Lower lobe of right lung (tissue), 2 donors: ENCODE measurements at regions of chr5 and their contacts with region 1.

Region 1: DNA sequence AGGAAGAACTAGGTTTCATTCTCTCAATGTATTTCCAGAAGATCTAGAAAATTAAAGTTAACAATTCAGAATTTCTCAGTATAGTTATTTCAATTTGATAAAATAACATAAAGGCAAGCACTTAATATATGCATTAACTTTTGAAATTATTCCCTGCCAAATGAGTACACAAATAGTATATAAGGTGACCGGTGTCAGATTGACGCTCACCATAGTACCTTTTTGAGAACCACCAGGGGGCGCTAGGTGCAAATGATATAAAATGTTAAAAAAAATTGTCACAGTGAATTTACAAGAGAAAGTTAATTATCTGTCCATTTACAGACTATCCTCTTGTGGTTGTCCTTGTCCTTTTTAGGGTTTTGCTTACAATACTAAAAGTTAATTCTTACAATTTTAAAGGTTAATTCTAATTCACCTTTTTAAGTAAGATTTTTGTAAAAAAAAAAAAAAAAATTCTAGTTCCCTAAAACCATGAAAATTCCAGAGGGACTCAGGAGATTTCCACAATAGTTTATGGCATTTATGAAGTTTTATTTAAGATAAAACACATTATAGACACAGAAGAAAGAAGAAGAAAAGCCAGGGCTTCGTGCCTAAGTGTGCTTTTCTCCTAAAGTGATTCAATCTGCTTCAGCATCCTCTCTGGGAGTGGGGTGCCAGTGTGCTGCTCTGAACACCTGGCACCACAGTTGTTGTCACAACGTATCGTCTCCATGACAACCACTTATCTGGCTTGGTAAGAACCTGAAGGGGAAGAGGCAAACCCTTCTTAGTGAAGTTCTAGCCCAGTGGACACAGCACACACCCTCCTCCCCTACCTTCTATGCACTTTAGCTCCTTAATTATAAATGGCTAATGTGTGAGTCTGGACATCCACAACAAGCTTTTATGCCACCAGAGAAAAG is 1.7 kb downstream of the ADAMTS16 start:
- DNase-seq: no peak
- ATAC-seq: peak in 1 of 2 donors; percentile 62
- H3K4me3 ChIP-seq: no peak overlapping the region
- H3K27ac ChIP-seq: no peak overlapping the region
- H3K4me1 ChIP-seq: peaks cover 14% of the 10 kb centered on the region
- H3K27me3 ChIP-seq: peaks cover 38% of the 10 kb centered on the region
- CTCF ChIP-seq: peak; percentile 78

Region 2: GRCh38 chr5:4879693-4880303 is 262.1 kb before region 1 on chr5:
- intact Hi-C with region 1: no loop called
- DNase-seq: peak; percentile 61
- ATAC-seq: peak; percentile 82 to 85
- H3K4me3 ChIP-seq: no peak overlapping the region
- H3K27ac ChIP-seq: no peak overlapping the region
- H3K4me1 ChIP-seq: no peaks in the 10 kb centered on the region
- H3K27me3 ChIP-seq: no peaks in the 10 kb centered on the region
- CTCF ChIP-seq: peak; percentile 88

Region 3: GRCh38 chr5:5419294-5420210 is 277.7 kb after region 1 on chr5:
- intact Hi-C with region 1: loop called (anchors 10 kb)
- DNase-seq: no peak
- ATAC-seq: no peak
- H3K4me3 ChIP-seq: no peak overlapping the region
- H3K27ac ChIP-seq: no peak overlapping the region
- H3K4me1 ChIP-seq: peaks cover 33% of the 10 kb centered on the region
- H3K27me3 ChIP-seq: no peaks in the 10 kb centered on the region
- CTCF ChIP-seq: peak; percentile 58

Region 4: DNA sequence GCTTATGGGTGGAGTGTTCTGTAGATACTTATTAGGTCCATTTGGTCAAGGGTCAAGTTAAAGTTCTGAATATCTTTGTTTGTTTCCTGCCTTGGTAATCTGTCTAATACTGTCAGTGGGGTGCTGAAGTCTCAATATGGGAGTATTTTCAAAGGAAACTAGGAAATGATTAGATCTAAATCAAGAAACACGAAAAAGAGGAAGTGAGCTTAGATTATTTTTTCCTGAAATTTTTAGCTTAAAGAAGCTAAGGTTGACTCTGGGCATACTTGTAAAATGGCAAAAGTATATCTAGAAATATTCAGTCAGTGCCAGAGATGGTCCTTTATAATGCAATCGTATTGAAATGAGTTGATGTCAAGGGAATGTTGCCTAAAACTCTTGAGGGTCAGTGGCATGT is 594.1 kb after region 1 on chr5:
- intact Hi-C with region 1: no loop called
- DNase-seq: no peak
- ATAC-seq: no peak
- H3K4me3 ChIP-seq: no peak overlapping the region
- H3K27ac ChIP-seq: no peak overlapping the region
- H3K4me1 ChIP-seq: no peaks in the 10 kb centered on the region
- H3K27me3 ChIP-seq: no peaks in the 10 kb centered on the region
- CTCF ChIP-seq: no peak